ENCODE measurements at regions of chr11 and their contacts with region 1.

Region 1: GRCh38 chr11:78645226-78646202 is 70.8 kb upstream of the NARS2 start:
- DNase-seq: peak; percentile 75
- H3K4me3 Mint-ChIP-seq: peak overlapping the region; percentile 11
- H3K27ac Mint-ChIP-seq: no peak overlapping the region
- H3K4me1 Mint-ChIP-seq: peaks cover 24% of the 10 kb centered on the region
- H3K27me3 Mint-ChIP-seq: no peaks in the 10 kb centered on the region

Region 2: GRCh38 chr11:78564490-78565467 is 80.7 kb before region 1 on chr11:
- CTCF ChIA-PET with region 1: no interaction called
- POLR2A ChIA-PET with region 1: no interaction called
- DNase-seq: peak; percentile 44
- H3K4me3 Mint-ChIP-seq: no peak overlapping the region
- H3K27ac Mint-ChIP-seq: peak overlapping the region; percentile 71
- H3K4me1 Mint-ChIP-seq: peaks cover 50% of the 10 kb centered on the region
- H3K27me3 Mint-ChIP-seq: no peaks in the 10 kb centered on the region

Region 3: DNA sequence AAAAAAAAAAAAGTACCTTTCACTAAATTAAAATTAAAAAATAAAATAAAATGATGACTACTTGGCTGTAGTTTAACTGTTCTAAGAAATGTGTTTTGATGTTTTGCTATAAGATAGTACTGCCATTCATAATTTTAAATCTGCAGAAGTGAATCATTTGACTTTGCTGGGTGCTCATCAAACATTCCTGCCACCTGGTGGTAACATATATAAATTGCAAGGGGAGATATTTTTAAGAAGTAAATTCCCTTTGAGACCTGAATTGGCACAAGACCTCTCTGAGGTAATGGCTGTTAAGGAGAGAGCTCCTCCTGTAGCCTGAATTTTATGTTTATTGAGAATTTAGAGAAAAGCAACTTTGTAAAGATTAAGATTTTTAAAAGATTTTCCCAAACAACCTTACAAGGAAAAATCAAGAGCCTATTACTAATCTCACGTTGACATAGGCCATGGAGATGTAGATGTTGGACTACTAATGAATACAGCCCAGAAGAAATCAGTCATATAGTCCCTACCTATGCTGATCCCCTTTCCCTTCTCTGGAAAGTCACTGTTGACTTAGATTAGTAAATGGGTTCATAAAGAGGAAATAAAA is 59.0 kb before region 1 on chr11:
- CTCF ChIA-PET with region 1: no interaction called
- POLR2A ChIA-PET with region 1: no interaction called
- DNase-seq: no peak
- H3K4me3 Mint-ChIP-seq: no peak overlapping the region
- H3K27ac Mint-ChIP-seq: no peak overlapping the region
- H3K4me1 Mint-ChIP-seq: no peaks in the 10 kb centered on the region
- H3K27me3 Mint-ChIP-seq: peaks cover 34% of the 10 kb centered on the region

Region 4: DNA sequence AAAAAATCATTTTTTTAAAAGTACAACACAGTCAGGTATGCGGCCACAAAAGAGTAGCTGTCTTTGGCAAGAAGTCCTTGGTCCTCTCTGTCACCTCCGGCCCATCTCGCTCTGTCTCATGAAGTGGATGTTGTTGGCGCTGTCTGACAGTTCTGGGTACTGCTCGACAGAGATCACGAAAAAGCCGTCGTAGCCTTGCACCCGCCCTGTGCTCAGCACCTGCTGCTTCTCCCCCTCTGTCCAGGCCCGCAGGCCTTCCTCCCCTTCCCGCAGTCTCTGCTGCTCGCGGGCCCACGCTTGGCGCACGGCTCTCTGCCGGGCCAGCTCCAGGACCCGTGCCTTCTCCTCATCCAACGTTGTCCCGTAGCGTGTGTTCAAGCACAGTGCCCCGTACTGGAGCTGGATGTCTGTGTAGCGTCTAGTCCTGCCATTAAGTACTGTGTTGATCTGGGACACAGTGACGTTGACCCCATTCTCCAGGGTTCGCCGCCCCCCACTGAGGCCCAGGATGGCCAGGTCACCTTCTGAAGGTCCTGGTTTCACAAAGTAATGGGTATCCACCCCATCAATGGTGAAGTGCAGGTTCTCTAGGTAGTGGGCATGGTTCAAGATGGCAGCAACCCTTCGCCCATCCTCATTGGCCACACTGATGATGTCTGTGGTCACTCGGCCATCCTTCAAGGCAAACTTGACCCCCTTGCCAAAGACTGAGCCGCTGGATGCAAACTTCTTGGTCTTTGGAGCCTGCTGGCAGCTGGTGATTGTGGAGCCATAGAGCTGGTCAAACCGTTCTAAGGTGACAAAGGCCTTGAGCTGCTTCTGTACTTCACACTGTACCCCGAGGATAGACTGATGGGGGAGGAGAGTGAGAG is 12.7 kb after region 1 on chr11:
- CTCF ChIA-PET with region 1: interaction called, 16 read pairs
- POLR2A ChIA-PET with region 1: no interaction called
- DNase-seq: no peak
- H3K4me3 Mint-ChIP-seq: no peak overlapping the region
- H3K27ac Mint-ChIP-seq: no peak overlapping the region
- H3K4me1 Mint-ChIP-seq: no peaks in the 10 kb centered on the region
- H3K27me3 Mint-ChIP-seq: peaks cover 6% of the 10 kb centered on the region

Region 5: GRCh38 chr11:78684377-78684776 is 38.9 kb after region 1 on chr11:
- CTCF ChIA-PET with region 1: no interaction called
- POLR2A ChIA-PET with region 1: no interaction called
- DNase-seq: no peak
- H3K4me3 Mint-ChIP-seq: no peak overlapping the region
- H3K27ac Mint-ChIP-seq: no peak overlapping the region
- H3K4me1 Mint-ChIP-seq: no peaks in the 10 kb centered on the region
- H3K27me3 Mint-ChIP-seq: peaks cover 4% of the 10 kb centered on the region

Region 6: GRCh38 chr11:78715639-78716311 is 70.3 kb after region 1 on chr11:
- CTCF ChIA-PET with region 1: interaction called, 69 read pairs
- POLR2A ChIA-PET with region 1: interaction called, 3 read pairs
- DNase-seq: peak; percentile 43
- H3K4me3 Mint-ChIP-seq: no peak overlapping the region
- H3K27ac Mint-ChIP-seq: no peak overlapping the region
- H3K4me1 Mint-ChIP-seq: no peaks in the 10 kb centered on the region
- H3K27me3 Mint-ChIP-seq: peaks cover 6% of the 10 kb centered on the region

Region 7: DNA sequence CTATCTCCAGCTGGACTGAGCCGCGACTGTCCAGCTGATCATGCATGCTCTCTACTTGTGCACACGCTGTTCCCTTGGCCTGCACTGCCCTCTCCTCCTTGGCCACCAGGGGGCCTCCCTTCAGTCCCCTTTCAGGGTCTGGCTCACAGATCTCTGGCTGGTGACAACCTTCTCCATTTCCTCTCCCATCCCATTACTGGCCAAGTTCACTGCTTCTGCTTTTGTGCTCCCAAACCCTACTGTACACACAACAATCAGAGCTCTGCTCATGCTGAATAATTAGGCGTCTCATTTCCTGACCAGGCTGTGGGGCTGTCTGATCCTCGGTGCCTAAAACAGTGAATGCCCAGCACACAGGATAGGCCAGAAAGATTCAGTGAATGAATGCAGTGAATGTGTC is 153.1 kb after region 1 on chr11:
- CTCF ChIA-PET with region 1: interaction called, 14 read pairs
- POLR2A ChIA-PET with region 1: no interaction called
- DNase-seq: peak; percentile 34
- H3K4me3 Mint-ChIP-seq: no peak overlapping the region
- H3K27ac Mint-ChIP-seq: no peak overlapping the region
- H3K4me1 Mint-ChIP-seq: no peaks in the 10 kb centered on the region
- H3K27me3 Mint-ChIP-seq: no peaks in the 10 kb centered on the region

Region 8: DNA sequence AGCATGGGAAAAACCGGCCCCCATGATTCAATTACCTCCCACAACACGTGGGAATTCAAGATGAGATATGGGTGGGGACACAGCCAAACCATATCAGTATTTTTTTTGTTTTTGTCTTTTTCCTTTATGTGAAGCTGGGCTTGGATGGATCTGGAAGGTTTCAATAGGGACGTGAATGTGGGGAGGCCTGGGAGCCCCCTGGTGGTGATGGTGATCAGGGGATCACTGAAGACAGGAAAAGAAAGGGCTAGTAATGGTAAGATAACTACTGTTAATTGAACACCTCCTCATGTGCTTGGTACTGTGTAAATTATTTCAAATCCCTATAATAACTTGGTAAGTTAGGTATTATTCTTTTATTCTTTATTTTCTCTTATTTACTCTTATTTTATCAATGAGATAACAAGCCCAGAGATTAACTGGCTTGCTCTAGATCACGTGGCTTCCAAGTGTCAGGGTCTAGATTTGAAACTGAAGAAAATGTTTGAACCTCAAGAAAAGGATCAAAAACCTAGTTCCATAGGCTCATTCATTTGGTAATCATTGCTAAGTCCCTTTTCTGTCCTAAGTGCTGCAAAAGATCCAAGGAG is 431.1 kb after region 1 on chr11:
- CTCF ChIA-PET with region 1: interaction called, 16 read pairs
- POLR2A ChIA-PET with region 1: no interaction called
- DNase-seq: peak; percentile 25
- H3K4me3 Mint-ChIP-seq: no peak overlapping the region
- H3K27ac Mint-ChIP-seq: no peak overlapping the region
- H3K4me1 Mint-ChIP-seq: no peaks in the 10 kb centered on the region
- H3K27me3 Mint-ChIP-seq: no peaks in the 10 kb centered on the region

Region 9: DNA sequence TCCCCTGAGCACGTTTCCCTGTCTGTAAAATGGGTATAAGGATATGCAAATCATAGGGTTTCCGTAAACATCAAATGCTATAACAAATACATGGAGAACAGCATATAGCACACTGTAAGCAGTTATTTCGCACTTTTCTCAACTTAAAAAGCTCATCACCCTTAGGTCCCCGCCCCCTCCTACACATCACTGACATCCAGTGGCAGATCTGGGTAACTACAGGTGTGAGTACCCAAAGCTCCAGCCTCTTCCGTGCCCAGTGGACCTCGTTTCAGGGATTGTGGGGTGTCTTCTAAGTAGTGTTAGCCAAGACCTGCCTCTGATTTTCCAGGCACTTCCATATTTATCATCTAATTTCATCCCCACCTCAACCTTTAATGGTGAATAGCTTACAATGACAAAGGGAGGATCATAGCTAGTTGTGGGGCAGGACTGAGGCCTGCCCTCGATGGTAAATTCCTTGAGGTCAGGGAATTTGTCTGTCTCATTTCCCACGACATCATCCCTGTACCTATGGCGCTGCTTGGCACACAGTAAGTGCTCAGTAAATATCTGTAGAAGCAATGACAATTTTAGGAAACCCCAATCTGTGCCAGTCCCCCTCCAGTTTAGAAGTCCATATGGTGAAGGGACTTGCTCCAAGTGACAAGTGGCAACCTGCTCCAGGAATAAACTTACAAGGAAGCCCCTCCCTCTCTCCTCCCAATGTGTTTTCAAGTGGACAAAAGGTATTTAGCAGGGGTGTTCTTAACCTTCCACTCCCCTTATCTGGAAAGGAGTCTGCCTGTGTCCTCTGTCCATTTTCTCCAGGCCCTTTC is 454.8 kb after region 1 on chr11:
- CTCF ChIA-PET with region 1: interaction called, 40 read pairs
- POLR2A ChIA-PET with region 1: no interaction called
- DNase-seq: peak; percentile 37
- H3K4me3 Mint-ChIP-seq: no peak overlapping the region
- H3K27ac Mint-ChIP-seq: no peak overlapping the region
- H3K4me1 Mint-ChIP-seq: no peaks in the 10 kb centered on the region
- H3K27me3 Mint-ChIP-seq: peaks cover 3% of the 10 kb centered on the region